Endothelial cell of umbilical vein (primary cell): ENCODE measurements at regions of chr5 and their contacts with region 1.

Region 1: GRCh38 chr5:172984243-172984953 is 827 bp downstream of the ATP6V0E1 start:
- DNase-seq: peak; percentile 92
- H3K4me3 ChIP-seq: peak overlapping the region; percentile 42 to 93 (median 92)
- H3K27ac ChIP-seq: peak overlapping the region; percentile 81
- H3K4me1 ChIP-seq: peaks cover 13% of the 10 kb centered on the region
- H3K27me3 ChIP-seq: no peaks in the 10 kb centered on the region
- CTCF ChIP-seq: peak; percentile 64 to 75
- POLR2A ChIP-seq: no peak

Region 2: DNA sequence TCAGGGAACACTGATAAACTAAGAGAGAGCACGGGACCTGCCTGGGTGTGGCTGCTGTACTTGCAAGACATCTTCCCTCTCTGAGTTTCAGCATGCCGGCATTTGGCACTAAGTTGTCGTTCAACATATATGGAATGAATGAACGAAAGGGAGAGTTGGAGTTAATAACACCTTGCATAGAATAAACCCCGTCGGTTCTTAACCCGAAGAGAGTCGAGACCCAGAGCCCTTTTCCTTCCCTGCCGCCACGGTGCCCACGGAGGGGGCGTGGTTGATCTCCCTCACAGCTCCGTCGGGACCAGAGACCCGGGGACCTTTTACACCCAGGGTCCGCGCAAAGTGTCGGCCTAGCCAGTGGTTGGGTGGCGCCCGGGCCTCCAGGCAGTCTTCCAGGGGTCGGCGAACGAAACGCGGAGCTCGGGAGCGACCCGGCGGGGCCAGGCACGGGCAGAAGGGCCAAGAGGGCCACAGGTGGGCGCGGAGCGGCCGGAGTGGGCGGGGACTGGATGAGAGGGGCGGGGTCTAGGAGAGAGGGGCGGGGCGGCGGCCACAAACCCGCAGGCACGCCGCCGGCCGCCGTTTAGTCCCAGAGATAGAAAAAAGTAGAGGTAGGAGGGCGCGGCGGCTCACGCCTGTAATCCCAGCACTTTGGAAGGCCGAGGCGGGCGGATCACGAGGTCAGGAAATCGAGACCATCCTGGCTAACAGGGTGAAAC is 25.9 kb before region 1 on chr5:
- CTCF ChIA-PET with region 1: interaction called, 10 read pairs
- POLR2A ChIA-PET with region 1: interaction called, 5 read pairs
- dilution Hi-C with region 1: no loop called
- intact Hi-C with region 1: loop called (anchors 1 kb)
- DNase-seq: peak; percentile 58
- H3K4me3 ChIP-seq: peak overlapping the region; percentile 59 to 66 (median 63)
- H3K27ac ChIP-seq: peak overlapping the region; percentile 59
- H3K4me1 ChIP-seq: peaks cover 22% of the 10 kb centered on the region
- H3K27me3 ChIP-seq: no peaks in the 10 kb centered on the region
- CTCF ChIP-seq: no peak
- POLR2A ChIP-seq: no peak

Region 3: DNA sequence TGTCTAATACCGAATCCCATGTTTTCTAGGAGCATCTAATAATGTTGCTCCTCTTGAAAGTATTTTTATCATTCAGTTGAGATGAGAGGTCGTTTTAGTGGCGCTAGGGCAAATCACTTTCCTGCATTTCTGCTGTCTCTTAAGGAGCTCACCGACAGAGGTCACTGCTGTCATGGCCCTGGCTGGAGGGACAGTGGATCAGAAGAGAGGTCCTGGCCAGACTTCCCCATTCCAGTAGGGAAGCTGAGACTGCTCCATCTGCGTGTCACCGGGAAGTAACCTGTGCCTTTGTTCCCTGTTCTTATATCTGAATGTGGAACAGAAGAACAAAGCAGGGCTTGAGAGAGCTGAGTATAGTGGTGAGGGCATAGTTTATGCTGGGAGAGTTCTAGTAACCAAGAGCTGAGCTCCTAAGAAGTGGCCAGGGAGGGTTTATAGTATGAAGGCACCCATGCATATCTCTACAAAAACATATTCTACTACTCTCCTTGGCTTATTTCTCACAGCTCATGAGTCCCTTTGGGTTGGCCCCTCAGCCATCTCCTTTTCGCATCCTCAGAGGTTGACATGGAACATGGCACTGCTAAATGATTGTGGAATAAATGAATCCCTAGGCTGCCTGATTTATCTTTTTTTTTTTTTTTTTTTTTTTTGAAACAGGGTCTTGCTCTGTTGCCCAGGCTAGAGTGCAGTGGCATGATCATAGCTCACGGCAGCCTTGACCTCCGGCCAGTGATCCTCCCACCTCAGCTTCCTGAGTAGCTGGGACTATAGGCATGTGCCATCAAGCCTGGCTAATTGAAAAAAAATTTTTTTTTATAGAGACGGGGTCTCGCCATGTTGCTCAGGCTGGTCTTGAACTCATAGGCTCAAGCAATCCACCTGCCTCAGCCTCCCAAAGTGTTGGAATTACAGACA is 26.4 kb after region 1 on chr5:
- CTCF ChIA-PET with region 1: interaction called, 15 read pairs
- POLR2A ChIA-PET with region 1: interaction called, 3 read pairs
- dilution Hi-C with region 1: no loop called
- intact Hi-C with region 1: no loop called
- DNase-seq: peak; percentile 75
- H3K4me3 ChIP-seq: no peak overlapping the region
- H3K27ac ChIP-seq: no peak overlapping the region
- H3K4me1 ChIP-seq: peaks cover 2% of the 10 kb centered on the region
- H3K27me3 ChIP-seq: no peaks in the 10 kb centered on the region
- CTCF ChIP-seq: peak; percentile 41 to 52
- POLR2A ChIP-seq: no peak

Region 4: GRCh38 chr5:173029499-173029921 is 45.1 kb after region 1 on chr5:
- CTCF ChIA-PET with region 1: interaction called, 4 read pairs
- POLR2A ChIA-PET with region 1: no interaction called
- dilution Hi-C with region 1: no loop called
- intact Hi-C with region 1: loop called (anchors 1 kb)
- DNase-seq: peak; percentile 76
- H3K4me3 ChIP-seq: no peak overlapping the region
- H3K27ac ChIP-seq: peak overlapping the region; percentile 14
- H3K4me1 ChIP-seq: peaks cover 26% of the 10 kb centered on the region
- H3K27me3 ChIP-seq: no peaks in the 10 kb centered on the region
- CTCF ChIP-seq: no peak
- POLR2A ChIP-seq: no peak

Region 5: GRCh38 chr5:173138707-173139106 is 154.3 kb after region 1 on chr5:
- CTCF ChIA-PET with region 1: interaction called, 10 read pairs
- POLR2A ChIA-PET with region 1: no interaction called
- dilution Hi-C with region 1: no loop called
- intact Hi-C with region 1: no loop called
- DNase-seq: no peak
- H3K4me3 ChIP-seq: no peak overlapping the region
- H3K27ac ChIP-seq: no peak overlapping the region
- H3K4me1 ChIP-seq: no peaks in the 10 kb centered on the region
- H3K27me3 ChIP-seq: no peaks in the 10 kb centered on the region
- CTCF ChIP-seq: no peak
- POLR2A ChIP-seq: no peak

Region 6: DNA sequence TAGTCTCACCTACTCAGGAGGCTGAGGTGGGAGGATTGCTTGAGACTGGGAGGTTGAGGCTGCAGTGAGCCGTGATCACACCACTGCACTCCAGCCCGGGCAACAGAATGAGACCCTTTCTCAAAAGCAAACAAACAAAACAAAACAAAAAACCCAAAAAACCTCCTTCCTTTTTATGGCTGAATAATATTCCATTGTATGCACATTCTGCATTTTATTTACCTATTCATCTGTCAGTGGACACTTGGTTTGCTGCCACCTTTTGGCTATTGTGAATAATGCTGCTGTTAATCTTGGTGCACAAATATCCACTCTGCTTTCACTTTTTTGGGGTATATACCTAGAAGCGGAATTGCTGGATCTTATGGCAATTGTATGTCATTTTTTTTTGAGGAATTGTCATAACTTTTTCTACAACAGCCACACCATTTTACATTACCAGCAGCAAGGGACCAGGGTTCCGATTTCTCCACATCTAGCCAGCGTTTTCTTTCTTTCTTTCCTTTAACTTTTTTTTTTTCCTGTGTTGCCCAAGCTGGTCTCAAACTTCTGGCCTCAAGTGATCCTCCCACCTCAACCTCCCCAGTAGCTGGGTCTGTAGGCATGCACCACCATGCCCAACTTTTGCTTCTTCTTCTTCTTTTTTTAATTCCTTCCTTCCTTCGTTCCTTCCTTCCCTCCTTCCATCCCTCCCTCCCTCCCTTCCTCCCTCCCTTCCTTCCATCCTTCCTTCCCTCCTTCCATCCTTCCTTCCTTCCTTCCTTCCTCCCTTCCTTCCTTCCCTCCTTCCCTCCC is 220.0 kb after region 1 on chr5:
- CTCF ChIA-PET with region 1: interaction called, 6 read pairs
- POLR2A ChIA-PET with region 1: no interaction called
- dilution Hi-C with region 1: no loop called
- intact Hi-C with region 1: loop called (anchors 1 kb)
- DNase-seq: peak; percentile 36
- H3K4me3 ChIP-seq: no peak overlapping the region
- H3K27ac ChIP-seq: no peak overlapping the region
- H3K4me1 ChIP-seq: no peaks in the 10 kb centered on the region
- H3K27me3 ChIP-seq: peaks cover 6 to 9% of the 10 kb centered on the region in 2 experiments
- CTCF ChIP-seq: peak; percentile 31 to 33
- POLR2A ChIP-seq: no peak

Region 7: DNA sequence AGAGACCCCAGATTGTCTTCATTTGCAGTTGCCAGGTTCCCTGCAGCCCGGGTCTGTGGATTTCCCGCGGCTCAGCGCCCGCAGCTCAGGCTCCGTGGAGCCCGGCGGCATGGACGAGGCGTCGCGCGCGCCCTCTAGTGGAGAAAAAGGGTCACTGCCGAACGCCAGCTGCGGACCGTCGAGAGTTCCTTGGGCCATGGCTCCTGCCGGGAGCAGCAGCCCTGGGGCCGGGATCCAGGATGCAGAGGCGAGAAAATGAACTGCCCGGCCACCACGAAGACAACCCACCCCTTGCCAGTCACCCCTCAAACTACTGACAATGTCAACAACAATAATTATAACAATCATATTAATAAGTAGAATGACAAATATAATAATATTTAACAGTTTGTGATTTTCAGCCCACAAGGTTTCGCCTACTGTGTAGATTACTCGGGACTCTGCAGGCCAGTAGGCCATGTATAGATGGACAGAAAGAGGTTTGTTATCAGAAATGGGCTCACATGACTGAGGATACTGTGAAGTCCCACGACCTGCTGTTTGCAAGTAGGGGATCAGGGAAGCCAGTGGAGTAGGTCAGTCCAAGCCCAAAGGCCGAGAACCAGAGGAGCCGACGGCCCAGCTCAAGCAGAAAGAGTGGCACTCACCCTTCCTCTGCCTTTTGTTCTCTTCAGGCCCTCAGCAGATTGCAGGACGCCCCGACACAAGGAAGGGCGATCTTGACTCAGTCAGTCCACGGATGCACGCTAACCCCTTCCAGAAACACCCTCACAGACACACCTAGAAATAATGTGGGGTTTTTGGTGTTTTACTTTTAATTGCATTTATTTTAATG is 588.9 kb after region 1 on chr5:
- CTCF ChIA-PET with region 1: interaction called, 9 read pairs
- POLR2A ChIA-PET with region 1: no interaction called
- dilution Hi-C with region 1: no loop called
- intact Hi-C with region 1: loop called (anchors 2 kb)
- DNase-seq: peak; percentile 65
- H3K4me3 ChIP-seq: no peak overlapping the region
- H3K27ac ChIP-seq: no peak overlapping the region
- H3K4me1 ChIP-seq: peaks cover 2% of the 10 kb centered on the region
- H3K27me3 ChIP-seq: peaks cover 0 to 4% of the 10 kb centered on the region in 2 experiments
- CTCF ChIP-seq: peak; percentile 94 to 98
- POLR2A ChIP-seq: no peak